Activated CD4-positive, alpha-beta T cell treated with anti-CD3 and anti-CD28 coated beads, Interleukin-2, amount 10 ng/mL, durations not matched to agents 24 days and 14 days (primary cell): ENCODE measurements at regions of chr10 and their contacts with region 1.

Region 1: DNA sequence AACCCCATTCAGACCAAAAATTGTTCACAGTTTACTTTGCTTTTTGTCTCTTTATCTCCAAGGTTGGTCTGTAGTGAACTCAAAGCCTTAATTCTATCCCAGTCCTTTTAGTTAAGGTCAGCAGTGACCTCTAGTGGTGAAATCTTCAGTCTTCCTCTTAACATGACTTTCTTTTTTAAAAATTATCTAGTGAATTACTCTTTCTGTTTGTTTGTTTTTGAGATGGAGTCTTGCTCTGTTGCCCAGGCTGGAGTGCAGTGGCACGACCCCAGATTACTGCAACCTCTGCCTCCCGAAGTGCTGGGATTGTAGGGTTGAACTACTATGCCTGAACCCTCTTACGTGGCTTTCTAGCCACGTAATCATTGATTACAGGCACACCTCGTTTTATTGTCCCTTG is 25.0 kb downstream of the ZNF487 start:
- DNase-seq: peak; percentile 87
- H3K4me3 Mint-ChIP-seq: no peak overlapping the region
- H3K27ac Mint-ChIP-seq: no peak overlapping the region
- H3K4me1 Mint-ChIP-seq: peaks cover 9% of the 10 kb centered on the region
- H3K27me3 Mint-ChIP-seq: no peaks in the 10 kb centered on the region

Region 2: GRCh38 chr10:42380926-42381547 is 1080.9 kb before region 1 on chr10:
- intact Hi-C with region 1: no loop called
- DNase-seq: no peak
- H3K4me3 Mint-ChIP-seq: no peak overlapping the region
- H3K27ac Mint-ChIP-seq: no peak overlapping the region
- H3K4me1 Mint-ChIP-seq: no peaks in the 10 kb centered on the region
- H3K27me3 Mint-ChIP-seq: no peaks in the 10 kb centered on the region

Region 3: DNA sequence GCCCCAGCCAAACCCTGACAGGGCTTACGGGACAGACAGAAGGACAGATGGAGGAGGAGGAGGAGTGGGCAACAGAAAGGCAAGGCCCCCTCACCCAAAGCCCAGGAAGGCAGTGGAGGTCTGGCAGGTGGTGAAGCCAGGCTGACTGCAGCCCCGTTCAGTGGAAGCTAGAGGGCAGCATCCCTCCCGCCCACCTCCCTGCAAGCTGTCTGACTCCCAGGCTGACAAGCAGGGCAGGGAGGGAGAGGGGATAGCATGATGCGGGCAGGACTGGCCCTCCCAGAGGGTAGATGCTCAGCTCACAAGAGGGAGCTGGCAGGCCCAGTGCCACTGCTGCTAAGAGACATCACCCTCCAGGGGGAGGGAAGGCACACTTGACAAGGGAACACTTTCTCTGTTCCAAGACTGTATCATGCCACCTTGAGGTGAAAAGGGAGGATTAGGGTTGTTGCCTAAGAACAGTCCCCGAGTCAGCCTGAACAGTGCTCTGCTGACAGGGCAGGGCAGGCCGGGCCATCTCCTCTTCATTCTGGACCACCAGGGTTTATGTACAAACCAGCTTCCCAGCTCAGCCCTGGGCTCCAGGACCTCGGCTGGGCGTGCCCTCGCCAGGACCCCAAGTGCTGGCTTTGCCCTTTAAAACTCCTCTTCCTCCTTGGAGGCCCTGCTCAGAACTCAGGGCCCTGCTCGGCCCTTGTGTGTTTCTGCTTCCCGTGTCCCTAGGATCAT is 256.8 kb before region 1 on chr10:
- intact Hi-C with region 1: loop called (anchors 2 kb)
- DNase-seq: peak; percentile 84
- H3K4me3 Mint-ChIP-seq: no peak overlapping the region
- H3K27ac Mint-ChIP-seq: no peak overlapping the region
- H3K4me1 Mint-ChIP-seq: peaks cover 6% of the 10 kb centered on the region
- H3K27me3 Mint-ChIP-seq: no peaks in the 10 kb centered on the region

Region 4: GRCh38 chr10:43292755-43293676 is 168.9 kb before region 1 on chr10:
- intact Hi-C with region 1: loop called (anchors 2 kb)
- DNase-seq: peak; percentile 86
- H3K4me3 Mint-ChIP-seq: peak overlapping the region; percentile 63
- H3K27ac Mint-ChIP-seq: peak overlapping the region; percentile 51
- H3K4me1 Mint-ChIP-seq: peaks cover 50% of the 10 kb centered on the region
- H3K27me3 Mint-ChIP-seq: no peaks in the 10 kb centered on the region